ENCODE measurements at regions of chr1 and their contacts with region 1.

Region 1: GRCh38 chr1:98749152-98749756 is 87.7 kb downstream of the SNX7 start:
- DNase-seq: no peak
- H3K4me3 Mint-ChIP-seq: no peak overlapping the region
- H3K27ac Mint-ChIP-seq: no peak overlapping the region
- H3K4me1 Mint-ChIP-seq: no peaks in the 10 kb centered on the region
- H3K27me3 Mint-ChIP-seq: peaks cover under 1% of the 10 kb centered on the region

Region 2: GRCh38 chr1:98794196-98794886 is 45.1 kb after region 1 on chr1:
- CTCF ChIA-PET with region 1: interaction called, 14 read pairs
- POLR2A ChIA-PET with region 1: no interaction called
- DNase-seq: peak; percentile 52
- H3K4me3 Mint-ChIP-seq: no peak overlapping the region
- H3K27ac Mint-ChIP-seq: no peak overlapping the region
- H3K4me1 Mint-ChIP-seq: peaks cover 8% of the 10 kb centered on the region
- H3K27me3 Mint-ChIP-seq: no peaks in the 10 kb centered on the region